Activated CD4-positive, alpha-beta T cell treated with anti-CD3 and anti-CD28 coated beads for 36 hours (primary cell): ENCODE measurements at regions of chr16 and their contacts with region 1.

Region 1: DNA sequence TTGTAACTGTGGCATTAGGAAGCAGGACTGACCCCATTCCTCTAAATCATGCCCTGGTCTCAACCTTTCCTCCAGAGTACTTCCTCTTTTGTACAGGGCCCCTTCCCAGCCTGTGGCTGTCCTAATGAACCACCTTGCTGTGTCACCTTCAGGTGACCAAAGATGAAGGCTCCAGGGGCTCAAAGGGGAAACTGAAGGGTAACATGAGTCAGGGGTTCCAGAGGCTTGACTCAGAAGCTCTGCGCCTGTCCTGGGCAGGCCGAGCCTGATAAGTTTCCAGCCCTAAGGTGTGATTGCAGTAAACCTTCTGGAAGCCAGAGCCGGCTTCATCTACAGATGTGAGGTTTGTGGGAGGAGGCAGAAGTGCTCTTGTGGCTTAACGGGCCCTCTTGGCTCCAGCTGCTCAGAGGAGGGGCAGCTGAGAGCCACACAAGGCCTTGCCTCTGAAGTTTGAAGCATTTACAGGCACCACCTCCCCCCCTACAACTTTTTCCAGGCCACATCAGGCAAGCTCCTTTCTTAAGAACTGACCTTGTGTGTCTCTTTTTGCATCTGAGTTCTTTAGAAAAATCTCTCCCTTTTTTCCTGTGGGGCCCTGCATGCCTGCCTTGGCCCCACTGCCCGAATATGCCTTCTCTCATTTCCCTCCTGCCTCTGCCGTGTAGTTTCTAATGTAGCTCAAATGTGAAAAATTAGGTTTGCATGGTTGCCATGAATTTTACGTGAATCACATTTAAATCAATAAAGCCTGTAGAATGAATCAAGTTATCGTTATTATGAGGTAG is 149.9 kb downstream of the CLEC16A start:
- DNase-seq: peak; percentile 87
- ATAC-seq: peak; percentile 77
- H3K4me3 Mint-ChIP-seq: peak overlapping the region; percentile 53
- H3K27ac Mint-ChIP-seq: peak overlapping the region; percentile 99
- H3K4me1 Mint-ChIP-seq: peaks cover 86% of the 10 kb centered on the region
- H3K27me3 Mint-ChIP-seq: no peaks in the 10 kb centered on the region

Region 2: DNA sequence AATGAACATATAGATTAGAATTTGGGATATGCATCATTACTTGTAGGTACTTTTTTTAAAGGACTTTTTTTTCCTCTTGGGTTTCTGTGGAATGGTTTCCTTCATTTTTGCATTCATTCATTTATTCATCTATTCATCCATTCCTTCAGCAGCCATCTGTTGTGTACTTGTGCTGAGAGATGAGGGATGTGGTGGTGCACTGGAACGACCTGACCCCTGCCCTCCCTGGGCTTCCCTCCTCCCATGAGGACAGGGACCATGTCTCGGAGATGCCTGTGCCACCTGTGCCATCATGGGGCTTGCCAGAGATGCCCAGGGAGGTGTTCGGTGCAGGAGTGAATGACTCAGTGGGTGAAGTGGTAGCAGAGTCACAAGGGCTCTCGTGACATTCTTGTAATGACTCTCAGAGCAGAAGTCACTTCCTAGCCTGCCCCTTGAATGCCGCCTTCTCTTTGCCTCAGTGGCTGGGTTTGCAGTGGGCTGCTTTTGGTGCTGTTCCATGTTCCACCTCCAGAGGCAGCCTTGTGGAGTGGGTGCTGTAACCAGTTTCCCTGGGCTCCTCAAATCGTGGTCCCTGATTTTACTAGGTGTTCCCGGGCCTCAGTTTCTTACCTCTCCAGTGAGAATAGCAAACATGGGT is 106.0 kb before region 1 on chr16:
- CTCF ChIA-PET with region 1: interaction called, 4 read pairs
- POLR2A ChIA-PET with region 1: no interaction called
- intact Hi-C with region 1: loop called (anchors 1 kb)
- DNase-seq: peak; percentile 91
- ATAC-seq: peak; percentile 88
- H3K4me3 Mint-ChIP-seq: peak overlapping the region; percentile 46
- H3K27ac Mint-ChIP-seq: peak overlapping the region; percentile 92
- H3K4me1 Mint-ChIP-seq: peaks cover 89% of the 10 kb centered on the region
- H3K27me3 Mint-ChIP-seq: no peaks in the 10 kb centered on the region

Region 3: DNA sequence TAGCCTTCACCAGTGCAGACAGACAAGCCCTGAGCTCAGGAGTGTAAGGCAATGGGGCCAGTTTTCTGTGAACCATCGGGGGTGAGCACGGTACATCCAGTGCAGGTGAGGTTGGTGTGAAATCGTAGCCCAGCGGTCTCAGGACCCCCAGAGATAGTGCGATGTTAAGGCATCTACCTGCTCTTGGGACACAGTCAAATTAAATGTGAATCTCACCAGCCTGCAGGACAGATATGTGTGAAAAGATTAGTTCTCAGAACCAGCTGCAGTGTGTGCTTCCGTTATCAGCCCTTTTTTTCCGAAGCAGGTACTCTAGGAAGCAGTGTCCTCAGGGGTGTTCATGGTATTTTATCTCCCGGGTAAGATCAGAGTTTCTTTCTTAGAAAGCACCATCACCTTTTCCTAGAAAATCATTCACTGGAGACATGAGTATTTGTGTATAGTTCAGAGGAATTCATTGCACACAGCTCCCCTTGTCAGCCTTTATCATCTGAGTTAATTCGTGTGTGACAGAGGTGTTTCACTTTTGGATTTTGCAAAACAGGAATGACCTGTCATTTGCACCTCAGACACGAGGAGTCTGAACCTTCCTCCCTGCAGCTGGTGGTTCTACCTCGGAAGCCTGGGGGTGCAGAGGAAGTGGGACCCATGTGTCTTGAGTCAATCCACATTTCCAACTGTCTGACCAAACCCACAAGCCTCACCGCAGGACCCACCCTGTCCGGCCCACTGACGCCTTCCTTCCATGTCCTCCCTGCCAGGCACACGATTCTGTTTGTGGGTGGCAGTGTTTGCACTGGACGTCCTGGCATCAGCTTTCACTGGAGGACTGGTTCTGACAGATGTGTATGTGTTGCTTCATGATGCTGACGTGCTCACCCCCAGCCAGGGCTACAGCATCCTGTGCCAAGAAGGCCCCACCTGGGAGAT is 42.1 kb before region 1 on chr16:
- CTCF ChIA-PET with region 1: interaction called, 13 read pairs
- POLR2A ChIA-PET with region 1: interaction called, 15 read pairs
- intact Hi-C with region 1: loop called (anchors 1 kb)
- DNase-seq: peak; percentile 85
- ATAC-seq: peak; percentile 89
- H3K4me3 Mint-ChIP-seq: peak overlapping the region; percentile 7
- H3K27ac Mint-ChIP-seq: peak overlapping the region; percentile 75
- H3K4me1 Mint-ChIP-seq: peaks cover 61% of the 10 kb centered on the region
- H3K27me3 Mint-ChIP-seq: no peaks in the 10 kb centered on the region

Region 4: GRCh38 chr16:11105038-11105903 is 11.0 kb after region 1 on chr16:
- CTCF ChIA-PET with region 1: interaction called, 10 read pairs
- POLR2A ChIA-PET with region 1: interaction called, 9 read pairs
- intact Hi-C with region 1: no loop called
- DNase-seq: peak; percentile 61
- ATAC-seq: peak; percentile 67
- H3K4me3 Mint-ChIP-seq: peak overlapping the region; percentile 18
- H3K27ac Mint-ChIP-seq: peak overlapping the region; percentile 88
- H3K4me1 Mint-ChIP-seq: peaks cover 61% of the 10 kb centered on the region
- H3K27me3 Mint-ChIP-seq: no peaks in the 10 kb centered on the region

Region 5: GRCh38 chr16:11196286-11196828 is 102.1 kb after region 1 on chr16:
- CTCF ChIA-PET with region 1: no interaction called
- POLR2A ChIA-PET with region 1: no interaction called
- intact Hi-C with region 1: no loop called
- DNase-seq: no peak
- ATAC-seq: no peak
- H3K4me3 Mint-ChIP-seq: no peak overlapping the region
- H3K27ac Mint-ChIP-seq: no peak overlapping the region
- H3K4me1 Mint-ChIP-seq: peaks cover 17% of the 10 kb centered on the region
- H3K27me3 Mint-ChIP-seq: no peaks in the 10 kb centered on the region

Region 6: GRCh38 chr16:11232852-11233726 is 138.8 kb after region 1 on chr16:
- CTCF ChIA-PET with region 1: interaction called, 6 read pairs
- POLR2A ChIA-PET with region 1: interaction called, 5 read pairs
- intact Hi-C with region 1: loop called (anchors 1 kb)
- DNase-seq: peak; percentile 96
- ATAC-seq: peak; percentile 82
- H3K4me3 Mint-ChIP-seq: peak overlapping the region; percentile 60
- H3K27ac Mint-ChIP-seq: peak overlapping the region; percentile 97
- H3K4me1 Mint-ChIP-seq: peaks cover 80% of the 10 kb centered on the region
- H3K27me3 Mint-ChIP-seq: no peaks in the 10 kb centered on the region

Region 7: GRCh38 chr16:11586856-11587642 is 492.8 kb after region 1 on chr16 and contains the start of gene LITAF:
- CTCF ChIA-PET with region 1: no interaction called
- POLR2A ChIA-PET with region 1: no interaction called
- intact Hi-C with region 1: loop called in 1 of 2 experiments (anchors 5 kb)
- DNase-seq: peak; percentile 74
- ATAC-seq: peak; percentile 53
- H3K4me3 Mint-ChIP-seq: peak within 1 kb of the TSS; percentile 89
- H3K27ac Mint-ChIP-seq: peak within 1 kb of the TSS; percentile 90
- H3K4me1 Mint-ChIP-seq: peaks cover 32% of the 10 kb centered on the region
- H3K27me3 Mint-ChIP-seq: no peaks in the 10 kb centered on the region
- total RNA-seq, gene LITAF: 99.0 to 116 TPM